ENCODE measurements at regions of chr1 and their contacts with region 1.

Region 1: DNA sequence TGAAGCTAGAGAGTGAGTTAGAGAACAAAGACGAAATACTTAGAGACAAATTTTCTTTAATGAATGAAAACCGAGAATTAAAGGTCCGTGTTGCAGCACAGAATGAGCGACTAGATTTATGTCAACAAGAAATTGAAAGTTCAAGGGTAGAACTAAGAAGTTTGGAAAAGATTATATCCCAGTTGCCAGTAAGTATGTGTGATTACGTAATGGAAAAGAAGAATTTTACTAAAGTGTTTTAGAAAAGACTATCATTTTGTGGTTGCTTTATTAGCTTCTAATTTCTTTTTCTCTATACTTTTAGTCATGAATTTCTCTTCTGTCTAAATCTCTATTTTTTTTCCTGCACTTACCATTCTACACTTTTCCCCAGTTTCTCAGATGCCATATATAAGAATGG is 26.7 kb downstream of the CCDC18 start:
- DNase-seq: no peak
- ATAC-seq: no peak
- H3K4me3 ChIP-seq: no peak overlapping the region
- H3K27ac ChIP-seq: no peak overlapping the region
- H3K4me1 ChIP-seq: no peaks in the 10 kb centered on the region
- H3K27me3 ChIP-seq: no peaks in the 10 kb centered on the region
- CTCF ChIP-seq: no peak

Region 2: GRCh38 chr1:93148001-93148400 is 59.2 kb before region 1 on chr1:
- CTCF ChIA-PET with region 1: no interaction called
- POLR2A ChIA-PET with region 1: interaction called, 10 read pairs
- intact Hi-C with region 1: no loop called
- DNase-seq: no peak
- ATAC-seq: no peak
- H3K4me3 ChIP-seq: no peak overlapping the region
- H3K27ac ChIP-seq: no peak overlapping the region
- H3K4me1 ChIP-seq: no peaks in the 10 kb centered on the region
- H3K27me3 ChIP-seq: no peaks in the 10 kb centered on the region
- CTCF ChIP-seq: no peak

Region 3: GRCh38 chr1:93483200-93483599 is 276.0 kb after region 1 on chr1:
- CTCF ChIA-PET with region 1: no interaction called
- POLR2A ChIA-PET with region 1: no interaction called
- intact Hi-C with region 1: no loop called
- DNase-seq: no peak
- ATAC-seq: no peak
- H3K4me3 ChIP-seq: no peak overlapping the region
- H3K27ac ChIP-seq: no peak overlapping the region
- H3K4me1 ChIP-seq: no peaks in the 10 kb centered on the region
- H3K27me3 ChIP-seq: no peaks in the 10 kb centered on the region
- CTCF ChIP-seq: no peak